ENCODE measurements at regions of chr14 and their contacts with region 1.

Region 1: GRCh38 chr14:73783107-73783727 is 68.4 kb upstream of the PTGR2 start:
- DNase-seq: no peak
- ATAC-seq: no peak

Region 2: DNA sequence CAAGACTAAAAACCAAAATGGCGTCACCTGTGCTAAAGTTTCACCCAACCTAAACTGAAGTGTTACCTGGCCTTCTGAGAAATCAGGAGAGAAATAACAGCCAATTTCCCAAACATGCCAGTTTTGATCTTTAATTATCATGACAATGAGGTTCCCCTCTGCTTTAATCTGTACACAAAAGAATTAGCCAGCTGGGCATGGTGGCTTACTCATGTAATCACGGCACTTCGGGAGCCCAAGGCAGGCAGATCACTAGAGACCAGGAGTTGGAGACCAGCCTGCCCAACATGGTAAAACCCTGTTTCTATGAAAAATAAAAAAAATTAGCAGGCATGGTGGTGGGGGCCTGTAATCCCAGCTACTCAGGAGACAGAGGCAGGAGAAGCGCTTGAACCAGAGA is 229.4 kb before region 1 on chr14:
- intact Hi-C with region 1: no loop called
- DNase-seq: no peak
- ATAC-seq: no peak

Region 3: DNA sequence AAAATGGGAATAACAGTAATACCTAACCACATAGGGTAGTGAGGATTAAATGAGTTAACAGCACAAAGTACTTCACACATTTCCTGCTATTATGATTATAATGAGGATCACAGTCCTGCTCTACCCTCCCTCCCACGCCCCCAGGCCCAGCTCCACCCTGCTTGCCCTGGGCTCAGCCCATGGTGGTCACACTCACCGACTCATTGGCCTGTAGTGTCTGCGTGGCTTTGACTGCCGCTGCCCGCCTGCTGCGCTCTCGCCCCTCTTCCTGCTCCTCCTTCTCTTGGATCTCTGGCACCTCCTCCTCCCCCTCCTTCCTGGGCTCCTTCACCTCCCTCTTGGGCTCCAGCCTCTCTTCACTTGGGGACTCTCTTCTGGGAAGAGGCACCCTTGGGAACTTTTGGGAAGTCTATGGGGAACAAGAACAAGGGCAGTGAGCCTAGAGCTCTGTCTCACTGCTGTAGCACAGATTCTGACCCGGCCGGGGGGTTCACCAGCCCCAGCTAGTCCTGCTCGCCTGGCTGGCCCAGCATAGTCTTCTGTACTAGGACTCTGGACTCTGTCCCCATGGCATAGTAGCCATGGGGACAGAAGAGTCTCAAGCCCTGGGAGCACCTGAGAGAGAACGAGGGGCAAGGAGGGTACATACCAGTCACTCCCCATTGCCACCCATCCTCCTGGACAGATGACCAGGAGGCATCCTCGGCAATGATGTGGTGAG is 62.0 kb before region 1 on chr14:
- intact Hi-C with region 1: loop called (anchors 2 kb)
- DNase-seq: no peak
- ATAC-seq: no peak

Region 4: GRCh38 chr14:73997108-73997943 is 214.1 kb after region 1 on chr14:
- intact Hi-C with region 1: no loop called
- DNase-seq: no peak
- ATAC-seq: no peak

Region 5: DNA sequence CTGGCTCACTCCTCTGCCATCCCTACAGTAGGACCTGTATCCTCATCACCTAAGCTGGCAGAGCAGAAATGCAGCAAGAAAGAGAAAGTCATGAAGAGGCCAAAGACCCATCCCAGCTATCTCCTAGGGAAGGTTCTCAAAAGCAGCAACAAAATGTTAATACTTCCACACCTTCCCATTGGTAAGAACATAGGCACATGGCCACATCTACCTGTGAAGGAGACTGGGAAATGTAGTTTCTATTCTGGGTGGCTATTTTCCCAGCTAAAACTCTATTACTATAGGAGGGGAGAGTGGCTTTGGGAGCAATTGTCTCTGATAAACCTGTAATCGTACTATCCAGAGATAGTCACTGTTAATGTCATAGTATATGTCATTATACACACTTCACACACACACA is 1205.8 kb after region 1 on chr14:
- intact Hi-C with region 1: no loop called
- DNase-seq: no peak
- ATAC-seq: no peak